Left cardiac atrium (tissue), 4 donors: ENCODE measurements at regions of chr21 and their contacts with region 1.

Region 1: GRCh38 chr21:43789276-43790009 is at the start of gene RRP1:
- DNase-seq: peak; percentile 91
- ATAC-seq: peak; percentile 95 to 96
- total RNA-seq, gene RRP1: 10.6 to 14.9 TPM

Region 2: GRCh38 chr21:43728467-43729390 is 60.7 kb before region 1 on chr21:
- intact Hi-C with region 1: loop called in 1 of 2 experiments (anchors 2 kb)
- DNase-seq: peak; percentile 96
- ATAC-seq: peak; percentile 86 to 90